Naive thymus-derived CD4-positive, alpha-beta T cell (primary cell): ENCODE measurements at regions of chr12 and their contacts with region 1.

Region 1: GRCh38 chr12:77065361-77066204 is at the start of gene E2F7:
- DNase-seq: peak; percentile 47 to 93 (median 69)
- ATAC-seq: peak; percentile 91
- H3K4me3 ChIP-seq: peak within 1 kb of the TSS; percentile 63
- H3K4me3 Mint-ChIP-seq: peak within 1 kb of the TSS; percentile 79 to 88 (median 85)
- H3K27ac ChIP-seq: no peak within 1 kb of the TSS
- H3K27ac Mint-ChIP-seq: peak within 1 kb of the TSS in 2 of 9 donors; percentile 69 to 80
- H3K4me1 ChIP-seq: peaks cover 0 to 7% of the 10 kb centered on the region in 2 donors
- H3K4me1 Mint-ChIP-seq: peaks cover 5 to 41% (median 8%) of the 10 kb centered on the region in 7 donors
- H3K27me3 ChIP-seq: no peaks in the 10 kb centered on the region
- H3K27me3 Mint-ChIP-seq: peaks cover 16 to 38% (median 30%) of the 10 kb centered on the region in 5 donors
- total RNA-seq, gene E2F7: 0.22 to 17.6 TPM in 2 of 5 experiments, not detected in the others

Region 2: DNA sequence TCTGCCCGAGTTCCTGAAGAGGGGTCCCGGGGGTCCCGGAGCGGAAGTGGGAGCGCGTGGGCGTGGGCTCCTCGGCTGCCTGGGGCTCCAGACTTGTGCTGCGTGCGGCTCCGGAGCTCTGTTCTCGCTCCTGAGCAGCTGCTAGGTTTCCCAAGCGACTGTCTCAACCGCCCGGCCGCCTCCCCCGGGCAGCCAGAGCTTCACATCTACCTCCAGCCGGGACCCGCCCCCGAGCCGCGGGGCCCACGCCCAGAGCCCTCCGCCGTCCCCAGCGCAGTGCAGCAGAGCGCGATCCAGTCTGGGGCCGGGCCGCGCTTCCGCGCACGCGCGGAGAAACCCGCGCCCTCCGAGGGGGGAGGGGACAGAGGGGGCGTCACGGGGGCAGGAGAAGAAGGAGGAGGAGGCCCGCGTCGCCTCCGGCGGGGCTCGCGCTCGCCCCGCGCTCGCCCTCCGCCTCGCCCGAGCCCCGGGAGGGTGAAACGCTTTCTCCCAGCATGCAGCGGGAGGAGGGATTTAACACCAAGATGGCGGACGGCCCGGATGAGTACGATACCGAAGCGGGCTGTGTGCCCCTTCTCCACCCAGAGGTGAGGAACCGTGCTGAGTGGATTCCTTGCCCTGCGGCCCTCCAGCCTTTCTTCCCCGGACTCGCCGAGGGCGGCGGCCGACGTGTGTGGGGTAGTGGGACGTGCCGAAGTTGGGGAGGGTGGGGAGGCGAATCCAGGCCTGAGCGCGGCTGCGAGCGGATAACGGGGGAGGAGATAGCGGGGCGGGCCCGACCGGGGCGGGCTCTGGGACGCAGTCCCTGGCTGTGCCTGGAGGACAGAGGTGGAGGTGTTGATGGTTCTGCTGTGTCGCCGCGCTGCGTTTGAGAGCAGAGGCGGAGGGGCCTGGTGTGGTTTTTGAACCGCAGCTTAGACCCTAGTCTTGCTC is 301.6 kb before region 1 on chr12 and contains the start of gene ZDHHC17:
- CTCF ChIA-PET with region 1: no interaction called
- POLR2A ChIA-PET with region 1: no interaction called
- intact Hi-C with region 1: loop called in 1 of 2 experiments (anchors 1 kb)
- DNase-seq: peak; percentile 90 to 95 (median 93)
- ATAC-seq: peak; percentile 90
- H3K4me3 ChIP-seq: peak within 1 kb of the TSS; percentile 84
- H3K4me3 Mint-ChIP-seq: peak within 1 kb of the TSS; percentile 92 to 98 (median 97)
- H3K27ac ChIP-seq: peak within 1 kb of the TSS; percentile 94
- H3K27ac Mint-ChIP-seq: peak within 1 kb of the TSS; percentile 95 to 99 (median 97)
- H3K4me1 ChIP-seq: peaks cover 8 to 13% of the 10 kb centered on the region in 2 donors
- H3K4me1 Mint-ChIP-seq: peaks cover 17 to 57% (median 46%) of the 10 kb centered on the region in 7 donors
- H3K27me3 ChIP-seq: no peaks in the 10 kb centered on the region
- H3K27me3 Mint-ChIP-seq: peaks cover 0 to 13% (median 0%) of the 10 kb centered on the region in 5 donors
- total RNA-seq, gene ZDHHC17: 27.3 to 60.9 (median 56.3) TPM

Region 3: GRCh38 chr12:76878899-76879709 is 186.5 kb before region 1 on chr12 and contains the start of gene CSRP2:
- CTCF ChIA-PET with region 1: no interaction called
- POLR2A ChIA-PET with region 1: no interaction called
- intact Hi-C with region 1: loop called in 1 of 2 experiments (anchors 5 kb)
- DNase-seq: peak; percentile 16 to 74 (median 43)
- ATAC-seq: peak; percentile 77
- H3K4me3 ChIP-seq: peak within 1 kb of the TSS; percentile 43
- H3K4me3 Mint-ChIP-seq: peak within 1 kb of the TSS; percentile 92 to 96 (median 94)
- H3K27ac ChIP-seq: peak within 1 kb of the TSS; percentile 6
- H3K27ac Mint-ChIP-seq: peak within 1 kb of the TSS in 3 of 9 donors; percentile 64 to 76 (median 72)
- H3K4me1 ChIP-seq: peaks cover 6% of the 10 kb centered on the region in 2 donors
- H3K4me1 Mint-ChIP-seq: peaks cover 5 to 23% (median 14%) of the 10 kb centered on the region in 7 donors
- H3K27me3 ChIP-seq: peaks cover 0 to 10% of the 10 kb centered on the region in 2 donors
- H3K27me3 Mint-ChIP-seq: peaks cover 44 to 66% (median 53%) of the 10 kb centered on the region in 5 donors
- total RNA-seq, gene CSRP2: not detected

Region 4: DNA sequence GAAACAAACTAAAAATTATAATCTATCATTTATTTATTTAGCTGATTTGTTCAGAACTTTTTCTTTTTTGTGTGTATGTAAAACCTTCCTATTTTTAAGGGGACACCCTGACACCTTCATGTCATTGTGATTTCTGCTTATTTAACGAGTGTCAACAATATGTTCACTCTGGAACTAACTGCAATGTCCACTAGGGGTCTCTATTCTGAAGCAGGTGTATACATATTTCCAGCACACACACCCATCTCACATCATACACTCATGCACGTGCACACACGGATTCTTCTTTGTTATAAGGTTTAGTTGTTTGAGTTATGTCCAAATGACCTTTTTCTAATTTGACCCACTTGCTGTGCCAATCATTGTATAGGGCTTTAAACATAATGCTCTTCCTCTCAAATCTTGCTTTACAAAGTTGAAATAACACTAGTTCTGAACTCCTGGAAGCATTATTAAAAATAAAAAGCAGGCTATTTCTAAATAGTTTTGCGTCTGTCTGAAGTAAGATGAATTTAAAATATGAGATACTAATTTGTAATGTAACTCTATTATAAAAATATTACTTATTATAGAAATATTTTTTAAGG is 15.7 kb before region 1 on chr12:
- CTCF ChIA-PET with region 1: no interaction called
- POLR2A ChIA-PET with region 1: no interaction called
- intact Hi-C with region 1: loop called in 1 of 2 experiments (anchors 1 kb)
- DNase-seq: peak in 7 of 9 donors; percentile 4 to 54 (median 33)
- ATAC-seq: peak; percentile 87
- H3K4me3 ChIP-seq: no peak overlapping the region
- H3K4me3 Mint-ChIP-seq: no peak overlapping the region
- H3K27ac ChIP-seq: no peak overlapping the region
- H3K27ac Mint-ChIP-seq: no peak overlapping the region
- H3K4me1 ChIP-seq: no peaks in the 10 kb centered on the region
- H3K4me1 Mint-ChIP-seq: peaks cover 0 to 7% (median 0%) of the 10 kb centered on the region in 7 donors
- H3K27me3 ChIP-seq: no peaks in the 10 kb centered on the region
- H3K27me3 Mint-ChIP-seq: no peaks in the 10 kb centered on the region

Region 5: GRCh38 chr12:77324763-77325468 is 259.3 kb after region 1 on chr12:
- CTCF ChIA-PET with region 1: no interaction called
- POLR2A ChIA-PET with region 1: no interaction called
- intact Hi-C with region 1: loop called in 1 of 2 experiments (anchors 10 kb)
- DNase-seq: peak in 2 of 9 donors; percentile 6 to 56
- ATAC-seq: peak; percentile 32
- H3K4me3 ChIP-seq: no peak overlapping the region
- H3K4me3 Mint-ChIP-seq: peak overlapping the region; percentile 10 to 83 (median 51)
- H3K27ac ChIP-seq: no peak overlapping the region
- H3K27ac Mint-ChIP-seq: no peak overlapping the region
- H3K4me1 ChIP-seq: no peaks in the 10 kb centered on the region
- H3K4me1 Mint-ChIP-seq: peaks cover 0 to 21% (median 13%) of the 10 kb centered on the region in 7 donors
- H3K27me3 ChIP-seq: peaks cover 0 to 5% of the 10 kb centered on the region in 2 donors
- H3K27me3 Mint-ChIP-seq: peaks cover 48 to 74% (median 58%) of the 10 kb centered on the region in 5 donors